Astrocyte of the cerebellum (primary cell): ENCODE measurements at regions of chr12 and their contacts with region 1.

Region 1: GRCh38 chr12:54541751-54542290 is 7.6 kb upstream of the PDE1B start:
- DNase-seq: no peak
- H3K4me3 ChIP-seq: no peak overlapping the region
- CTCF ChIP-seq: no peak

Region 2: DNA sequence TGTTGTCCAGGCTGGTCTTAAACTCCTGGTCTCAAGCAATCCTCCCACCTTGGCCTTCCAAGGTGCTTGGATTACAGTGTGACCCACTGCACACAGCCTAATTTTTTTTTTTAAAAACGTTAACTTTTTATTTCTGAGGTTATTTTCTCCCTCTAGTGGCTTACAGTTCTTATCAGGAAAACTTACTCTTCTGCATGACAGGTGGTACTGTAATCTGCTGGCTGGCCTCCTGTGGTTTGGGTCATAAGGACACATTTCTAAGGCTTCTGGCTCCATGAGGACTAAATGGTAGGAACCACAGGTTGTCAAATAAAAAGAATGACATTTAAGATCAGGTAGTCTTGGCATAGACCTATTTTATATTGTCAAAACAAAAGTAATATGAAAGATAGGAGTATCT is 52.0 kb before region 1 on chr12:
- in situ Hi-C with region 1: loop called (anchors 5 kb)
- DNase-seq: no peak
- H3K4me3 ChIP-seq: no peak overlapping the region
- CTCF ChIP-seq: no peak

Region 3: GRCh38 chr12:54502485-54502884 is 39.3 kb before region 1 on chr12:
- in situ Hi-C with region 1: no loop called
- DNase-seq: no peak
- H3K4me3 ChIP-seq: no peak overlapping the region
- CTCF ChIP-seq: no peak